Left cardiac atrium (tissue), 4 donors: ENCODE measurements at regions of chr1 and their contacts with region 1.

Region 1: DNA sequence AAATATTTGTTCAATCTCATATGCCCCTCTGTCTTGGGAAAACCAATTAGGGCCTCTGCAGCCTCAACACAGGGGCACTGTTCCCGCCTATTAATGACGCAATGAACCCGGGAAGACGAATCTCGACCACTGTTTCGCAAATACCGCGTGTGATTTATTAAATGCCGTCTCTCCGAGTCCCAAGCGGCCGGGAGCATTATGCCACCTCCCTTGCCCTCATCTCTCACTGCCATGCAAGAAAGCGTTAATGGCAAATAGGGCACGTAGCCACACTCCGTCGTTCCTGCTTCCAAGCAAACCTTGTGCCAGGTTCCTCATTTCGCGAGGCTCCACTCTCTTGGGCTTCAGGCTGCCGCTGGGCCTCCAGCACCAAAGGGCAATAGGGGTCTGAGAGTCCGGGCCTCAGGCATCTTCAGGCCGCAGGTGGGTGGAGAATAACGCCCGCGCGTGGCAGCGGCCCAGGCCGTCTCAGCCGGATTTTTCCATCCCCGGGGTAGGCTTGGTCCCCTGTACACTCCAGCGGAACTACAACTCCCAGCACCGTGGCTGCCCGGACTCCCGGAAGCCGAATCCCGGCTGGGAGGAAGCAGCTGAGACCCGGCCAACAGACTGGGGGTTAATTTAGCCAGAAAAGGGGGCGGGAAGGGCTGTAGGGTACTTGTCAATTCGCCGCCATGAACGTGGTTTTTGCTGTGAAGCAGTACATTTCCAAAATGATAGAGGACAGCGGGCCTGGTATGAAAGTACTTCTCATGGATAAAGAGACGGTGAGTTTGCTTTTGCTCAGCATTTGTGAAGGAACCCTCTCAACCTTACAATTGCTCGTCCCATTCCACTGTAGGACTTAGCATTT is at the start of gene VPS45:
- DNase-seq: peak; percentile 94
- ATAC-seq: peak; percentile 98 to 99
- total RNA-seq, gene VPS45: 39.3 to 40.2 TPM

Region 2: DNA sequence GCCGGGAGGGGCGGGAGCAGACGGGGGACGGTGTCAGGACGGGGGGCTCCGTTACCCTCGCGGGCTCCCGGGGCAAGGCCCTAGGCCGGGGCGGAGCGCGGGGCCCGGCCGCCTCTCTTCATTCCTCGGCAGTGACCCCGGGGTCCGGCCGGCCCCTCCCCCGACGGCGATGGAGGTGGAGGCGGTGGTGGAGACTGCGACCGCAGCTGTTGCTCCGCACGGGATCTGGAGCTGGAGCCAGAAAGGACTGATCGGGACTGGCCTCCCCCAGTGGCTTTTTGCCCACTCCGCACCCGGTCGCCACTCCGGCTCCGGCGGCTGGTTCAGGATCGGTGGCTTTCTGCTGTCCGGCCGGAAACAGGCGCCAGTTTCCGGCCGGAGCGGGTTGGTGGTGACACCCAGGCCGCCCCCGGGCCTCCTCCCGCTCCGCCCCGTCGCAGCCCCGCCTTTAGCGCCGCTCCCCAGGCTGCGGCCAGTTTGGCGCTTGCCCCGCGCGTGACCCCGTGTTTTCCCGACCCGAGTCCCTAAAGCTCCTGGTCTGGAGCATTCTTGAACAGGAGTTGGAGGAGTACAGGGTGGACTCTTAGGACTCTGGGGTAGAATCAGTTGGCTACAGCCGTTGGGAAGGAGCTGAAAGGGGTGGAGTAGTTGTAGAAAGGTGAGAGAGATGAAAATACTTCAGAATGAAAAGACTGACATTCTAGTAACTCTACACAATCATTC is 56.9 kb before region 1 on chr1 and contains the start of gene OTUD7B:
- intact Hi-C with region 1: loop called in 1 of 2 experiments (anchors 10 kb)
- DNase-seq: peak; percentile 90
- ATAC-seq: peak; percentile 95 to 96
- total RNA-seq, gene OTUD7B: 20.3 to 21.4 TPM